Endothelial cell of umbilical vein (primary cell): ENCODE measurements at regions of chr18 and their contacts with region 1.

Region 1: GRCh38 chr18:9437021-9437437 is 38.3 kb upstream of the RALBP1 start:
- DNase-seq: peak; percentile 26
- H3K4me3 ChIP-seq: no peak overlapping the region
- H3K27ac ChIP-seq: no peak overlapping the region
- H3K4me1 ChIP-seq: no peaks in the 10 kb centered on the region
- H3K27me3 ChIP-seq: no peaks in the 10 kb centered on the region
- CTCF ChIP-seq: no peak
- POLR2A ChIP-seq: no peak

Region 2: GRCh38 chr18:9136315-9137155 is 300.5 kb before region 1 on chr18 and contains the start of gene ANKRD12:
- CTCF ChIA-PET with region 1: no interaction called
- POLR2A ChIA-PET with region 1: no interaction called
- dilution Hi-C with region 1: no loop called
- intact Hi-C with region 1: no loop called
- DNase-seq: peak; percentile 99
- H3K4me3 ChIP-seq: peak within 1 kb of the TSS; percentile 50 to 86 (median 70)
- H3K27ac ChIP-seq: peak within 1 kb of the TSS; percentile 95
- H3K4me1 ChIP-seq: peaks cover 31% of the 10 kb centered on the region
- H3K27me3 ChIP-seq: no peaks in the 10 kb centered on the region
- CTCF ChIP-seq: no peak
- POLR2A ChIP-seq: peak; percentile 82
- total RNA-seq, gene ANKRD12: 25.1 and 25.4 TPM in 2 replicates

Region 3: GRCh38 chr18:9417073-9417841 is 19.8 kb before region 1 on chr18:
- CTCF ChIA-PET with region 1: no interaction called
- POLR2A ChIA-PET with region 1: no interaction called
- dilution Hi-C with region 1: no loop called
- intact Hi-C with region 1: loop called (anchors 2 kb)
- DNase-seq: peak; percentile 69
- H3K4me3 ChIP-seq: no peak overlapping the region
- H3K27ac ChIP-seq: peak overlapping the region; percentile 21
- H3K4me1 ChIP-seq: peaks cover 22% of the 10 kb centered on the region
- H3K27me3 ChIP-seq: no peaks in the 10 kb centered on the region
- CTCF ChIP-seq: no peak
- POLR2A ChIP-seq: no peak

Region 4: GRCh38 chr18:9474108-9474982 is 37.3 kb after region 1 on chr18:
- CTCF ChIA-PET with region 1: no interaction called
- POLR2A ChIA-PET with region 1: no interaction called
- dilution Hi-C with region 1: no loop called
- intact Hi-C with region 1: no loop called
- DNase-seq: no peak
- H3K4me3 ChIP-seq: peak overlapping the region; percentile 56 to 78 (median 59)
- H3K27ac ChIP-seq: peak overlapping the region; percentile 74
- H3K4me1 ChIP-seq: peaks cover 17% of the 10 kb centered on the region
- H3K27me3 ChIP-seq: no peaks in the 10 kb centered on the region
- CTCF ChIP-seq: no peak
- POLR2A ChIP-seq: no peak